Left ventricle myocardium inferior (tissue), 1 donor: ENCODE measurements at regions of chr6 and their contacts with region 1.

Region 1: DNA sequence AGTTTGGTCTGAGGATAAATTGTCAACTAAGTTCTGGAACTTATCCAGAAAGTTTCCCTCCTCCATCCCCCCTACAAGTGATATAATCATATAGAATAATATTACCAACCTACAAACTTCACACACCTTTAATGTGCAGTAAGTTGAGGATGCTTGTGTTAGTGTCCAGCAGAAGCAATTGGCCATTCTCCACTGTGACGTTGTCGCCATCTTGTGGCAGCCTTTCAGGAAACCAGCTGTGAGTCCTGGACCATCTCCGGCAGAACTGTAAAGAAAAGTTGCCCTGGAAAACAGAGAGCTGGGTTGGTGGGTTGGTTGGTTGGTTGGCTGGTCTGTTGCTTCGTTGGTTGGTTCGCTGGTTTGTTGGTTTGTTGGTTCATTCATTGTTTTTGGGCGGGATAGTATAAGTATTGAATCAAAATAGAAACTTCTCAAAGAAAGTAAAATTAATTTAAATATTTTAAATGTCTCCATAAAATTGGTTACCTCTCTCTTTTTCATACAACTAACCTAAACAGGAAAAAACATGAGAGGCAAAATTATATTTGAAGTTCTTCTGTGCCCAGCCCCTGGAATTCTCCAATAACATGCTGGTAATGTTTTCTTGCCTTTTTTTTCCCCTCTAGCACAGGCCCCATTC is 127.5 kb downstream of the PKHD1 start:
- DNase-seq: peak; percentile 31
- H3K4me3 ChIP-seq: no peak overlapping the region
- H3K27ac ChIP-seq: no peak overlapping the region
- H3K4me1 ChIP-seq: no peaks in the 10 kb centered on the region
- H3K27me3 ChIP-seq: peaks cover 56% of the 10 kb centered on the region
- CTCF ChIP-seq: peak; percentile 70

Region 2: DNA sequence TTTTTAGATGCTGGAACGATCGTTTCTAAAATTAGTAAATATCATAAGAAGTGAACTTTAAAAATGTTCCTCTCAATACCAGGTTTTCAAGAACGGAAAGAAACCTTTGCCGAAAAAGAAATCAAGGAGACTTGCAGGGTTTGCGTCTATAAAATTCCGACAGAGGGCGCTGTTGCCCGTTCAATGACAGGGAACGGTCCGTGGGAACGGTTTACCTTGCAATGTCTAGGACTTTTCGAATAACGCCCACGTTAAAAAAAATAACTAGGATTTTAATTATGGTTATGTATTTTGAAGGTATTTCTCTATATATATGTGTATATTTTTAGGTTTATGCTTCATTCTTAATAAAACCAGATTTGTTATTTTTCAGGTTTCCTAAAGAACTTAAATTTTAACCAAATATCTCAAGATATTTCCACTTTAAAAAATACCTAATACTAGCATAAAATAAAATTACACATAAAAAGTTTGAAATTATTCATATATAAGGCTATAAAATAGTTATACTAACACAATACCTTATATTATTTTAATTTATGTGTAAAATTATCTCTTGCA is 1143.7 kb before region 1 on chr6:
- intact Hi-C with region 1: loop called (anchors 10 kb)
- DNase-seq: peak; percentile 37
- H3K4me3 ChIP-seq: peak overlapping the region; percentile 51
- H3K27ac ChIP-seq: no peak overlapping the region
- H3K4me1 ChIP-seq: peaks cover 19% of the 10 kb centered on the region
- H3K27me3 ChIP-seq: peaks cover 99% of the 10 kb centered on the region
- CTCF ChIP-seq: peak; percentile 85